RWPE1 (cell line): ENCODE measurements at regions of chr18 and their contacts with region 1.

Region 1: DNA sequence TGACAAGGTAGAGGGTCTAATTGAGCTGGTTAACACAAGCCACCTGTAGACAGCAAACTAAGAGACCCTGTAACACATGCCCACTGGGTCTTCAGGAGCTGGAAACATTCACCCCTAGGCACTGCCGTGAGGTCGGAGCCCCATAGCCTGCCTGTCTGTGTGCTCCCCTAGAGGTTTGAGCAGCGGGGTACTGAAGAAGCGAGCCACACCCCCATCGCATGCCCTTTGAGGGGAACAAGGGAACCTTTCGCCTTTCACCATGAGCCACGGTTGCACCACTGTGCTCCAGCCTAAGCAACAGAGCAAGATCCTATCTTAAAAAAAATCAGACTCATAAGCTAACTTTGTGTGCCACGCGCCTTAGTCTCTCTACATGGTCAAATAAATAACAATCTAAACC is 36.2 kb upstream of the RAB27B start:
- DNase-seq: no peak
- H3K27ac ChIP-seq: no peak overlapping the region
- CTCF ChIP-seq: no peak

Region 2: DNA sequence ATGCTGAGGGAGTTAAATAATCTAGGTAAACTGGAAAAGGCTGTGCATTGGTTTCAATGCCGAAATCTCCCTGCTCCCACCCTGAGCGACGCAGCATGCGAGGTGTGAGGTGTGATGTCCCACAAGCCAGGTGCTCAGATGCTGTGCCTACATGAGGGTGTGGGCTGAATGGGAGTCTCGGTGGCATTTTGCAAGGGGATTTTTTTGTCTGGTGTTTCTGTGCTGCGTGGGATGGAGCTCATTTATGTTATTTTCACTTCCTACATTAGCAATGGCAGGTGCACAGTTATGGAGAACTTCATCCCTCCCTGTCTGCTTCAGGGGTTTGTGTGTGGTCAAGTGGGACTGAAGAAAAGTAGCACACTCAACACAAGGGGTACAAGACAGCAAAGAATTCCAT is 277.4 kb after region 1 on chr18:
- CTCF ChIA-PET with region 1: no interaction called
- POLR2A ChIA-PET with region 1: no interaction called
- DNase-seq: no peak
- H3K27ac ChIP-seq: no peak overlapping the region
- CTCF ChIP-seq: no peak

Region 3: GRCh38 chr18:55087998-55088401 is 295.9 kb after region 1 on chr18:
- CTCF ChIA-PET with region 1: no interaction called
- POLR2A ChIA-PET with region 1: interaction called, 12 read pairs
- DNase-seq: no peak
- H3K27ac ChIP-seq: no peak overlapping the region
- CTCF ChIP-seq: no peak